ENCODE measurements at regions of chrX and their contacts with region 1.

Region 1: GRCh38 chrX:71859637-71860036 is 51.0 kb upstream of the NHSL2 start:
- DNase-seq: no peak
- ATAC-seq: peak; percentile 55
- H3K4me3 ChIP-seq: no peak overlapping the region
- H3K27ac ChIP-seq: no peak overlapping the region
- H3K4me1 ChIP-seq: no peaks in the 10 kb centered on the region
- H3K27me3 ChIP-seq: no peaks in the 10 kb centered on the region
- CTCF ChIP-seq: peak; percentile 56 to 65 (median 59)
- EP300 ChIP-seq: no peak
- POLR2A ChIP-seq: no peak
- RAD21 ChIP-seq: peak; percentile 72

Region 2: GRCh38 chrX:71283403-71284143 is 576.1 kb before region 1 on chrX and contains the start of gene NONO:
- CTCF ChIA-PET with region 1: no interaction called
- POLR2A ChIA-PET with region 1: no interaction called
- RAD21 ChIA-PET with region 1: no interaction called
- SMC1A ChIA-PET with region 1: no interaction called
- in situ Hi-C with region 1: no loop called
- intact Hi-C with region 1: no loop called
- DNase-seq: peak; percentile 90
- ATAC-seq: peak; percentile 85
- H3K4me3 ChIP-seq: peak within 1 kb of the TSS; percentile 78
- H3K27ac ChIP-seq: peak within 1 kb of the TSS; percentile 91
- H3K4me1 ChIP-seq: peaks cover 4% of the 10 kb centered on the region
- H3K27me3 ChIP-seq: no peaks in the 10 kb centered on the region
- CTCF ChIP-seq: peak in 1 of 3 experiments; percentile 20; a peak in 1 of 6 replicates
- EP300 ChIP-seq: no peak
- POLR2A ChIP-seq: peak; percentile 88
- RAD21 ChIP-seq: no peak
- polyA plus RNA-seq, gene NONO: 206 to 359 TPM

Region 3: DNA sequence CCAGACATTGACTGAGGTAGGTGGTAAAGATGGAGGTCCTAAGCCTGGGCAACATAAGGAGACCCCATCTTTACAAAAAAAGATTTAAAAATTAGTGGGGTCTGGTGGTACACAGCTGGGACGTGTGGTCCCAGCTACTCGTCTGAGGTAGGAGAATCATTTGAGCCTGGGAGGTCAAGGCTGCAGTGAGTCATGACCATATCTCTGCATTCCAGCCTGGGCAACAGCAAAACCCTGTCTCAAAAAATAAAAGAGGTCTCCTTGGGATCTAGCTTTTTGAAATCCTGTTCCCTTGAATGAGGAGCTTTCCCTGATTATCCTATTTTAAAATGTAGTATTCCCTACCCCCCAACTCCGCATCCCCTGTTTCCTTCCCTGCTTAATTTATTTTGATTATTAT is 405.4 kb before region 1 on chrX:
- CTCF ChIA-PET with region 1: no interaction called
- POLR2A ChIA-PET with region 1: no interaction called
- RAD21 ChIA-PET with region 1: no interaction called
- SMC1A ChIA-PET with region 1: no interaction called
- in situ Hi-C with region 1: loop called (anchors 25 kb)
- intact Hi-C with region 1: no loop called
- DNase-seq: no peak
- ATAC-seq: no peak
- H3K4me3 ChIP-seq: no peak overlapping the region
- H3K27ac ChIP-seq: no peak overlapping the region
- H3K4me1 ChIP-seq: no peaks in the 10 kb centered on the region
- H3K27me3 ChIP-seq: no peaks in the 10 kb centered on the region
- CTCF ChIP-seq: no peak
- EP300 ChIP-seq: no peak
- POLR2A ChIP-seq: no peak
- RAD21 ChIP-seq: no peak

Region 4: GRCh38 chrX:71669492-71669891 is 190.1 kb before region 1 on chrX:
- CTCF ChIA-PET with region 1: interaction called, 3 read pairs
- POLR2A ChIA-PET with region 1: no interaction called
- RAD21 ChIA-PET with region 1: interaction called, 5 read pairs
- SMC1A ChIA-PET with region 1: interaction called, 7 read pairs
- in situ Hi-C with region 1: loop called (anchors 25 kb)
- intact Hi-C with region 1: loop called (anchors 1 kb)
- DNase-seq: no peak
- ATAC-seq: no peak
- H3K4me3 ChIP-seq: no peak overlapping the region
- H3K27ac ChIP-seq: no peak overlapping the region
- H3K4me1 ChIP-seq: peaks cover 6% of the 10 kb centered on the region
- H3K27me3 ChIP-seq: no peaks in the 10 kb centered on the region; a peak in 1 of 4 replicates
- CTCF ChIP-seq: no peak
- EP300 ChIP-seq: no peak
- POLR2A ChIP-seq: no peak
- RAD21 ChIP-seq: no peak

Region 5: GRCh38 chrX:71895607-71896006 is 36.0 kb after region 1 on chrX:
- CTCF ChIA-PET with region 1: no interaction called
- POLR2A ChIA-PET with region 1: no interaction called
- RAD21 ChIA-PET with region 1: no interaction called
- SMC1A ChIA-PET with region 1: no interaction called
- in situ Hi-C with region 1: no loop called
- intact Hi-C with region 1: no loop called
- DNase-seq: no peak
- ATAC-seq: no peak
- H3K4me3 ChIP-seq: no peak overlapping the region
- H3K27ac ChIP-seq: no peak overlapping the region
- H3K4me1 ChIP-seq: no peaks in the 10 kb centered on the region
- H3K27me3 ChIP-seq: no peaks in the 10 kb centered on the region
- CTCF ChIP-seq: no peak
- EP300 ChIP-seq: no peak
- POLR2A ChIP-seq: no peak
- RAD21 ChIP-seq: no peak

Measured in GM12878 (cell line).